Psoas muscle (tissue), 8 donors: ENCODE measurements at regions of chr5 and their contacts with region 1.

Region 1: GRCh38 chr5:67493676-67494075 is 297.1 kb upstream of the CD180 start:
- DNase-seq: peak; percentile 30 to 65
- ATAC-seq: peak; percentile 90 to 93 (median 92)
- H3K4me3 ChIP-seq: peak overlapping the region; percentile 49
- H3K27ac ChIP-seq: peak overlapping the region; percentile 87
- H3K4me1 ChIP-seq: peaks cover 21% of the 10 kb centered on the region
- H3K27me3 ChIP-seq: no peaks in the 10 kb centered on the region
- CTCF ChIP-seq: peak; percentile 46

Region 2: DNA sequence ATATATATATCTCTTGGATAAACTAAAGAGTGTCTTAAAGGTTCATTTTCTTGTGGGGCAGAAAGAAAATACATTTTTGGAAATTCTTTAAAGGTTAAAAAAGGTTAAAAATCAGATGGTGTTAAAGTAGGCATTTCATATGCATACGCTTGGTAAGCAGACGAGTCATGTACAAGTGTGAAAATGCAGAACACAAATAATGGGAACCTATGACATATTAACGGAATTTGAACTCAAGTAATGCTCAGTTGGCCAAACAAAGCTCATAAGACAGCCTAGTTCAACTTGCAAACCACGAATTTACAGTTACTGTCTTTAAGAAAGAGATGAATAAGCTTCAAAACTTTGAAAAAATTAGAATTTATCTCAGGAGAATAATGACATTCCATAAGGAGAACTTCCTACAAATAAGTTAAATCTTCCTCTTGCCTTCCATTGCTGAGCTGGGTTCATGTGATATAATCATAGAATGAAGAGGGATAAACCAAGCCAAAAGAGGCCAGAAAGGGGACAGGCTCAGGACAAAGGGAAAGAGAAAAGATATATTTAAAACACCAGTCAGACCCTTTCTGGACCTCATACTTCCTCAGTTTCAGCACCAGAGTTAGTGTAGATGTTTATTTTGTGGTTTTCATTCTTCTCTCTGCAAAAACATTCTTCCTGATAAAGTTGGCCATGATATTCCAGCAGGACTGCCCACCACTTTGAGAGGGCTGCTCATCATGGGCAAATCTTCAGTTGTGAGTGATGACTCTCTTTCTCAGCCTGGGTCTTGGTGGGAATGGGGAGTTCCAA is 40.4 kb before region 1 on chr5:
- intact Hi-C with region 1: no loop called
- DNase-seq: no peak
- ATAC-seq: peak in 1 of 4 donors; percentile 17
- H3K4me3 ChIP-seq: no peak overlapping the region
- H3K27ac ChIP-seq: no peak overlapping the region
- H3K4me1 ChIP-seq: no peaks in the 10 kb centered on the region
- H3K27me3 ChIP-seq: no peaks in the 10 kb centered on the region
- CTCF ChIP-seq: no peak

Region 3: GRCh38 chr5:67677422-67677970 is 183.8 kb after region 1 on chr5:
- intact Hi-C with region 1: loop called in 1 of 2 experiments (anchors 10 kb)
- DNase-seq: peak; percentile 59 to 85
- ATAC-seq: peak; percentile 96 to 98 (median 97)
- H3K4me3 ChIP-seq: peak overlapping the region; percentile 9
- H3K27ac ChIP-seq: peak overlapping the region; percentile 82
- H3K4me1 ChIP-seq: peaks cover 18% of the 10 kb centered on the region
- H3K27me3 ChIP-seq: no peaks in the 10 kb centered on the region
- CTCF ChIP-seq: no peak

Region 4: DNA sequence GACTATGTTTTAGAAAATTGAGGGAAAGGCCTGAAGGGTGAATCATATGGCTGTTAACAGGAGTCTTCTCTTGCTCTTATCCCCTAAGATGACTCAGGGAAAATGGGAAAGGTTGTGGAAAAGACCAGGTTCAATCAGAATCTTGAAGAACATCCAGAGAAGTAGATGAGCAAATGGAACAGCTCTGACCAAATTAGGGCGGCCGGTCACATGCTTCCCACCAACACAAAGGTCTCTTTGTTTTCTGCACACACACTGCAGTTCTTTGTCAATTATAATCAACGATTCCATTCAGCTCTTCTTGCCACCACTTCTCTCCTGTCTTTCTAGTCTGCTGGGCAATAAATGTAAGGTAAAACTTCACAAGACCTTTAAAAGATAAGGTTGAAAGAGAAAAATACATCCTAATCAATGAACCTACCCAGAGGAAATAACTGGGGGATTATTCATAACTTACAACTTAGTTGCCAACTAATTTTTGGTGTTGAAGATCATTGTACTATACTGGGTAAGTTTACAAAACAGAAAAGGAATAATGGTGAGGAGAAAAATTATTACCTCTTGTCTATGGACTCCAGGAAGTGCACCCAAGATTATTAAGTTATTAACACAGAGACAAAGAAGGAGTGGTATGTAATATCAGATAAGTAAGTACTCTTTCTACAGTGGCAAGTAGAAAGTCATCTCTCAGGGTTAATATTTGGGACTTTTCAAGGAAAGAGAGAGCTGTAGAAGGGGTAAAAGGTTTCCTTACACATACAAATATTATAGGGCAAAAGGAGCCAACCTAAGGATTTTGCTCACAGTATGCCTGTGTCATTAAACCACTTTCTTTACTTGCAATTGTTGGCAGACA is 280.0 kb after region 1 on chr5:
- intact Hi-C with region 1: loop called in 1 of 2 experiments (anchors 10 kb)
- DNase-seq: no peak
- ATAC-seq: peak; percentile 6 to 38 (median 21)
- H3K4me3 ChIP-seq: no peak overlapping the region
- H3K27ac ChIP-seq: peak overlapping the region; percentile 59
- H3K4me1 ChIP-seq: peaks cover 42% of the 10 kb centered on the region
- H3K27me3 ChIP-seq: no peaks in the 10 kb centered on the region
- CTCF ChIP-seq: no peak

Region 5: DNA sequence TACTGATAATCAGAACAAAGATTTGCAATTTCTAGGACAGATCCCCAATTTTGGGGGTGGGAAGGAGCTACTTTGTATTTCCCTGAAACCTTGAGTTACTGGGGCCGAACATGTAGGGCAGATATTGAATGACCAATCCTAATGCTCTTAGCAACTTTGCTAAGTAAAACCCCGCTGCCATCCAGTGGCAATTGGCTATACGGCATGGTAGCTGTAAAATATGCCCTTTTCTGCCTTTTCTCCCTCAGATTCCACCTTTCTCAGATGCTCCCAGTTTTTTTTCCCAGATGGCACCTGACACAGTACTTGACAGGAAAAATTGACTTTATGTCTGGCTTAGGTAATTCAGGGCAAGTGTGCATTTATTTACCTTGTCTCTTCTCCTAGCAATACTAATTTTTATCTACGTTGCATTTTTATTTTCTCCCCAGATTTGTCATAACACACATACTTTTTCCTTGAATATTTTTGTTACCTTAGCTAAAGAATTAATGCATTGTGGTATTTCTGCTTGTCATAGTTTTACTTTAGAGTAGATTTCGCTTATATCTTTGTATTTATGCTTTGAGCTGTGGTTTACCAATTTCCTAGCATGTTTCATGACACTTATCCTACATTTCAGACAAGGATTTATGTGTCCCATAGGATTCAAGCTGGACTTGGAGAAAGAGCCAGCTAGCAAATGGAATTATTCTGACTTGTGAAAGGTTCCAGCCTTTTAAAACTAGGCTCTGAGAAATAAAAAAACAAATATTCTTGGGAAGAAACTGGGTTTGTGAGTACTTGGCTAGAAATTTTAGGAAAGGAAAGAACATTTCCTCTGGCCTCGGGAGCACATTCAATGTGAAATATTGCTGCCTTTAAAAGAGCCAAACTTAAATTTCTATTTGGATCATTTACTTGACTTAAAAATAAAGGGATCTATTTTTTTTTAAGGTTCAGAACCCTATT is 759.3 kb after region 1 on chr5:
- intact Hi-C with region 1: loop called in 1 of 2 experiments (anchors 5 kb)
- DNase-seq: peak; percentile 32 to 60
- ATAC-seq: peak; percentile 80 to 86 (median 83)
- H3K4me3 ChIP-seq: peak overlapping the region; percentile 46
- H3K27ac ChIP-seq: peak overlapping the region; percentile 72
- H3K4me1 ChIP-seq: peaks cover 94% of the 10 kb centered on the region
- H3K27me3 ChIP-seq: no peaks in the 10 kb centered on the region
- CTCF ChIP-seq: peak; percentile 86